ENCODE measurements at regions of chr6 and their contacts with region 1.

Region 1: GRCh38 chr6:89970609-89971337 is 76.5 kb downstream of the GJA10 start:
- DNase-seq: no peak
- ATAC-seq: peak; percentile 59 to 75
- H3K4me3 ChIP-seq: no peak overlapping the region
- H3K27ac ChIP-seq: peak overlapping the region in 1 of 4 donors; percentile 64
- H3K4me1 ChIP-seq: peaks cover 30 to 36% of the 10 kb centered on the region in 2 donors
- H3K27me3 ChIP-seq: no peaks in the 10 kb centered on the region
- CTCF ChIP-seq: peak; percentile 26 to 64 (median 44)
- POLR2A ChIP-seq: no peak

Region 2: GRCh38 chr6:90304308-90304707 is 333.5 kb after region 1 on chr6:
- in situ Hi-C with region 1: loop called in 2 of 4 experiments (anchors 10 to 25 kb)
- intact Hi-C with region 1: loop called (anchors 5 kb)
- DNase-seq: no peak
- ATAC-seq: no peak
- H3K4me3 ChIP-seq: no peak overlapping the region
- H3K27ac ChIP-seq: no peak overlapping the region
- H3K4me1 ChIP-seq: no peaks in the 10 kb centered on the region
- H3K27me3 ChIP-seq: no peaks in the 10 kb centered on the region
- CTCF ChIP-seq: no peak
- POLR2A ChIP-seq: no peak

Region 3: GRCh38 chr6:90369024-90369519 is 398.3 kb after region 1 on chr6:
- in situ Hi-C with region 1: loop called in 1 of 4 experiments (anchors 10 kb)
- intact Hi-C with region 1: no loop called
- DNase-seq: peak; percentile 69
- ATAC-seq: peak; percentile 99 to 100
- H3K4me3 ChIP-seq: no peak overlapping the region
- H3K27ac ChIP-seq: peak overlapping the region; percentile 55 to 81 (median 62)
- H3K4me1 ChIP-seq: peaks cover 8 to 13% of the 10 kb centered on the region in 2 donors
- H3K27me3 ChIP-seq: no peaks in the 10 kb centered on the region
- CTCF ChIP-seq: no peak
- POLR2A ChIP-seq: no peak

Region 4: GRCh38 chr6:90393232-90393884 is 422.6 kb after region 1 on chr6:
- in situ Hi-C with region 1: loop called in 2 of 4 experiments (anchors 5 to 10 kb)
- intact Hi-C with region 1: loop called (anchors 10 kb)
- DNase-seq: peak; percentile 28 to 42
- ATAC-seq: peak; percentile 75 to 95
- H3K4me3 ChIP-seq: no peak overlapping the region
- H3K27ac ChIP-seq: no peak overlapping the region
- H3K4me1 ChIP-seq: no peaks in the 10 kb centered on the region
- H3K27me3 ChIP-seq: no peaks in the 10 kb centered on the region
- CTCF ChIP-seq: peak; percentile 70 to 85 (median 79)
- POLR2A ChIP-seq: no peak

Measured in gastrocnemius medialis (tissue), 4 donors.